IMR-90 (cell line): ENCODE measurements at regions of chr13 and their contacts with region 1.

Region 1: GRCh38 chr13:33799950-33800592 is 17.9 kb upstream of the RFC3 start:
- DNase-seq: peak; percentile 46
- ATAC-seq: peak; percentile 92
- H3K4me3 ChIP-seq: no peak overlapping the region
- H3K27ac ChIP-seq: no peak overlapping the region
- H3K4me1 ChIP-seq: no peaks in the 10 kb centered on the region
- H3K27me3 ChIP-seq: peaks cover 6% of the 10 kb centered on the region
- CTCF ChIP-seq: peak; percentile 50
- POLR2A ChIP-seq: no peak
- RAD21 ChIP-seq: peak; percentile 50

Region 2: DNA sequence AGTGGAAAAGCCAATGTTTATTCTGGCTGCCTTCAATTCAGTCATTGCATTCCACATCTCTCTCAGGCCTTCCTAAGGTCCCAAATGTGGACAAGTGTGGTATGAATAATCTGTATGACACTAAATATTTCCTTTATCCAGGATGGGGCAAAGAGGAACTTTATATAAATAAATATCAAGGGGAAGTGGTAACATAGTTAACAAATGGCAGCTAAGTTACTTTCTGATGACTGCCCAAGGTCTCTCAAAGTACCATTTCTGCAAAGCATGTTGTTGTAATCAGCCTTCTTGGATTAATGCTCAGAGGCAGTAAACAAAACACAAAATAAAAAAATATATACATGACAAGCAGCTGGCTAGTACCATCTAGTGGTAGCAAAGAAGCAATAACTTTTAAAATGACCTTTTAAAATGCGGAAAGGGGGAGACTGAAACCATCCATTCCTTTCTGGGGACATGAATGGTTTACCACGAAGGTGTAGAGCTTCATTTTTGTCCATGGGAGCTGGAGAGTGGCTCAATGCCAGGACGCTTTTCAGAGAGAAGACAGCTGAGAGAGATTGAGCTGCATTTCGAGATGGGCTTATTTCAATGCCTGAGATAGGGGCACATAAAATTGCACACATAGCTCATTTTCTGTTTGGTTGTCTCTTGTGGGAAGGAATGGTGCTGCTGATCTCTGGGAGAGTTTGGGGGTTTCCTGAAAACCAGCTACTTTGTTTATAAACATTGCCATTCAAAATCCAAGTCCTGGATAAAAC is 277.1 kb after region 1 on chr13:
- CTCF ChIA-PET with region 1: interaction called, 3 read pairs
- POLR2A ChIA-PET with region 1: no interaction called
- dilution Hi-C with region 1: no loop called
- in situ Hi-C with region 1: no loop called
- intact Hi-C with region 1: loop called (anchors 1 kb)
- DNase-seq: peak; percentile 1
- ATAC-seq: peak; percentile 75
- H3K4me3 ChIP-seq: no peak overlapping the region
- H3K27ac ChIP-seq: no peak overlapping the region
- H3K4me1 ChIP-seq: peaks cover 2% of the 10 kb centered on the region; the same call in 1 of the 2 replicates
- H3K27me3 ChIP-seq: no peaks in the 10 kb centered on the region
- CTCF ChIP-seq: peak; percentile 51
- POLR2A ChIP-seq: no peak
- RAD21 ChIP-seq: peak; percentile 51